ENCODE measurements at regions of chr1 and their contacts with region 1.

Region 1: DNA sequence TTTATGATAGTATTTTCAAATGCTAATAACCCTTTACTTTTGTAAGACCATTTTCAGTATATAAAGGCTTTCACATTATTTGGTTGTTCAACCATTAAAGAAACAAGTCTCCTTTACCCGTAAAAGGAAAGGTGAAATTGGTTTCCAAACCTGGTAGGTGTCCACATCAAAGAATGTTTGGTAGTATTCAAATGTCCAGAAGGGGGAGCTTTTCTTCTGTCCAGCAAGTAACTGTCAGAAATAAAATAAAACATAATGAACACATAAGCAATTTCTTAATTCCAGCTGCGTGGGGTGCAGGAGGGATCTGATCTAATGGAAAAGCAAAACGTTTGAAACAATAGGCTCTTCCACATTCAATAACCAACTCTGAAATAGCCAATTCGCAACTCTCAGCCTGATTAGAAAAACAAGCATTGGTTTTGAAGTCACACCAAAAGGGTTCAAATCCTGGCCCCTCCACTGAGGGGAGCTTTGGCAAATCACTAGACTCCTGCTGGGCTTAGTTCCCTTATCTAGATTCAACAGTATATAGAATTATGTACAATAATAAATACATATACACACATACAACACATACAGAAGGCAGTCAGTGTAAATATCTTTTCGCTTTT is 11.0 kb downstream of the YIPF1 start:
- DNase-seq: no peak
- ATAC-seq: no peak
- H3K4me3 ChIP-seq: no peak overlapping the region
- H3K27ac ChIP-seq: no peak overlapping the region
- H3K4me1 ChIP-seq: no peaks in the 10 kb centered on the region
- H3K27me3 ChIP-seq: no peaks in the 10 kb centered on the region
- CTCF ChIP-seq: peak; percentile 64

Region 2: GRCh38 chr1:54037476-54037875 is 158.9 kb after region 1 on chr1:
- intact Hi-C with region 1: loop called in 1 of 2 experiments (anchors 10 kb)
- DNase-seq: no peak
- ATAC-seq: no peak
- H3K4me3 ChIP-seq: no peak overlapping the region
- H3K27ac ChIP-seq: no peak overlapping the region
- H3K4me1 ChIP-seq: no peaks in the 10 kb centered on the region
- H3K27me3 ChIP-seq: no peaks in the 10 kb centered on the region
- CTCF ChIP-seq: no peak

Region 3: GRCh38 chr1:54047384-54048305 is 169.0 kb after region 1 on chr1:
- intact Hi-C with region 1: no loop called
- DNase-seq: no peak
- ATAC-seq: no peak
- H3K4me3 ChIP-seq: no peak overlapping the region
- H3K27ac ChIP-seq: no peak overlapping the region
- H3K4me1 ChIP-seq: peaks cover 53% of the 10 kb centered on the region
- H3K27me3 ChIP-seq: no peaks in the 10 kb centered on the region
- CTCF ChIP-seq: no peak

Measured in psoas muscle (tissue), 8 donors.